ENCODE measurements at regions of chr20 and their contacts with region 1.

Region 1: GRCh38 chr20:35619196-35620095 is 3.8 kb downstream of the SPAG4 start:
- DNase-seq: peak; percentile 72
- H3K4me3 Mint-ChIP-seq: peak overlapping the region; percentile 84
- H3K27ac Mint-ChIP-seq: peak overlapping the region; percentile 87
- H3K4me1 Mint-ChIP-seq: peaks cover 22% of the 10 kb centered on the region
- H3K27me3 Mint-ChIP-seq: no peaks in the 10 kb centered on the region

Region 2: GRCh38 chr20:35454881-35455609 is 164.4 kb before region 1 on chr20 and contains the start of gene CEP250:
- intact Hi-C with region 1: loop called (anchors 1 kb)
- DNase-seq: peak; percentile 89
- H3K4me3 Mint-ChIP-seq: peak within 1 kb of the TSS; percentile 88
- H3K27ac Mint-ChIP-seq: peak within 1 kb of the TSS; percentile 98
- H3K4me1 Mint-ChIP-seq: peaks cover 18% of the 10 kb centered on the region
- H3K27me3 Mint-ChIP-seq: no peaks in the 10 kb centered on the region
- total RNA-seq, gene CEP250: 51.0 and 54.6 TPM in 2 replicates

Region 3: GRCh38 chr20:35664544-35665221 is 45.2 kb after region 1 on chr20 and contains the starts of genes CPNE1 and RBM12:
- intact Hi-C with region 1: loop called (anchors 1 kb)
- DNase-seq: peak; percentile 93
- H3K4me3 Mint-ChIP-seq: peak within 1 kb of the TSS; percentile 95
- H3K27ac Mint-ChIP-seq: peak within 1 kb of the TSS; percentile 99
- H3K4me1 Mint-ChIP-seq: peaks cover 41% of the 10 kb centered on the region
- H3K27me3 Mint-ChIP-seq: no peaks in the 10 kb centered on the region
- total RNA-seq, gene CPNE1: 342 and 347 TPM in 2 replicates
- total RNA-seq, gene RBM12: 147 and 148 TPM in 2 replicates

Region 4: DNA sequence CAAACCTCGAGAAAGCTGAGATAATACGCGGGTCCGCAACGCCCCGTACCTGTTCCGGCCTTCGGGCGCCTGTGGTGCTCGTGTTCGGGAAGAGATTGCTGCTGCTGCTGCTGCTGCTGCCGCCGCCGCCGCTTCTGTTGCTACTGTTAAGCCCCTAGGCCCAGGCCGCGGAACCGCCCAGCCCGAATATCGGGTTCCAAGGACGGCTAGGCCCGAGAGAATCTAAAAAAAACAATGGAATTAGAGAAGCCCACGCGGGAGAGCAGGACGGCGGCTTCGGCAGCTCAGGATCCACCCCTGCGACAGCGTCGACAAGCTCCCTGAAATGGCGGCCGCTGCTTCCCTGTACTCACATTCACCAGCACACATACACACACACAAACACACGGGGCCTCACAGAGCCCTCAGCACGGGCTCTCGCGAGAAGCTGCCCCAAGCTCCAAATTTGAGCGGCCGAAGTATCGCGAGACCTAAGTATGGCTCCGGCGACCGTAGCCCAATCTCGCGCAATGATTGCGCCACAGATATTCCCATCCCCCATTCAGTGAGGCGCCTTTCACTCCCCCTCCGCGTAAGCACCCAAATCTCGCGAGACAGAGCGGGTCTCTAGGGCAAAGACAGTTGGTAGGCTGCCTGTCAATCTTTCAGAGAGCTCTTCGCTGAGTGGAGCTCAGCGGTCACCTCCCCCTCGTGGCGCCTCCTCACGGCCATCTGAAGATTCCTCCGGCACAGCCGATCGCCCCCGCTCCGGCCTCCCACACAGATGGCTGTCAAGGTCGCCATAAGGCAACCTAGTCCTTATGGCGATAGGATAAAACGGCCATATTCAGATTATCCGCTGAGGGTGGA is 122.7 kb after region 1 on chr20 and contains the start of gene RBM39:
- intact Hi-C with region 1: loop called (anchors 1 kb)
- DNase-seq: peak; percentile 100
- H3K4me3 Mint-ChIP-seq: peak within 1 kb of the TSS; percentile 97
- H3K27ac Mint-ChIP-seq: peak within 1 kb of the TSS; percentile 99
- H3K4me1 Mint-ChIP-seq: peaks cover 34% of the 10 kb centered on the region
- H3K27me3 Mint-ChIP-seq: no peaks in the 10 kb centered on the region
- total RNA-seq, gene RBM39: 358 and 360 TPM in 2 replicates

Region 5: DNA sequence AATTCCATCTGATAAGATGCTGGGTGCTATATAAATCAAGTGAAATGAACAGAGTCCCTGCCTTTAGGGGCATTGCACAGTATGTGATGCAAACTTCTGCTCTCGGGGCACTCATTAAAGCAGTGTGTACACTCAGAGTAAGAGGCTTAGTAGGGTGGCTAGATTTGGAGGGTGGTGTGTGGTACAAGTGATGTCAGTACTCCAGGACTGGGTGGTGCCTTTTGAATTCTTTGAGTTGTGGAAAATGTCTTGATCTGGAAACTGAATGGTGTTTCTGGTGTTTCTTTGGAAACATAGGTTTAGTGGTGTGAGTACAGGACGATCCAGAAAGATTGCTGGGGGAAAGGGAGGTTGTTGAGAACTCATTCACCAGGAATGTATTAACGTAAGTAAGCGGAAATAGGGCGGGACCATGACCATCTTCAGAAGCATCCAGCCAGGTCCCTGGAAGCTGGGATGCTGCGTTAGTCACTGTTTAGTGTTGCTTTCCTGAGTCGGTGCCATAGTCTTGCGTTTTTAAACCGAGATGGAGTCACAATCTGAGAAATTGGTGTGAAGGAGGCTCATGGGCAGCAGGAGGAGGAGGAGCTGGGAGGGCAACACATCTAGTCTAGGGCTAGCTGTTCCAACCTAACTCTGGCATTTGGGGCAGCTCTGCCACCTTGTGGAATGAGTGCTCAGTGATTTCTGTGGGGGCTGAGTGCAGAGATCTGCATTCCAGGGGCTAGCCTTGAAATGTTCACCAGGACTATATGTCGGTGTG is 264.5 kb after region 1 on chr20:
- intact Hi-C with region 1: loop called (anchors 10 kb)
- DNase-seq: peak; percentile 34
- H3K4me3 Mint-ChIP-seq: no peak overlapping the region
- H3K27ac Mint-ChIP-seq: no peak overlapping the region
- H3K4me1 Mint-ChIP-seq: peaks cover 8% of the 10 kb centered on the region
- H3K27me3 Mint-ChIP-seq: no peaks in the 10 kb centered on the region